GM13977 (cell line): ENCODE measurements at regions of chr11 and their contacts with region 1.

Region 1: GRCh38 chr11:111974451-111974850 is 37.3 kb downstream of the DIXDC1 start:
- DNase-seq: no peak
- CTCF ChIP-seq: no peak

Region 2: DNA sequence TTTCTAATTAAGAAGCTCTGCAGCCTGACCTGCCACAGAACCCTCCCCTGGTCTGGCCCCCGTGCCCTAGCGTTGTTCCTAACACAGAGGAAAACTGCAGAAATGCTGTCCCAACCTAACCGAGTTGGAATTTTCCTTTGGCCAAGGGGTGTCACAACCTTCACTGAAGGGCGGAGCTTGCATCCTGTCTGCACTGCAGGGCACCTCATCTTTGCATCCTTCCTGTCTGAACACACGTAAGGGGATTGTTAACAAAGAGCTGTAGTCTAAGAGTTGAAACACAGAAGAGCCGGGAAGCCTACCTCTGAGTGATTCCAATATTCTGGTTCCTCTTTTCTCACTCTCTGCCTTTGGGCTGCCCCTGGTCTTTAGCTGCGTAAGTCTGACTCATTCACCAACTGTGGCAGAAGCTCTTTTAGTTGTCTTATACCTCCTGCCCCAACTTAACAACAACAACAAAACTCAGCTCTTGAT is 35.7 kb before region 1 on chr11:
- in situ Hi-C with region 1: loop called (anchors 5 kb)
- DNase-seq: peak; percentile 70
- CTCF ChIP-seq: no peak